CD4-positive, alpha-beta memory T cell (primary cell): ENCODE measurements at regions of chr17 and their contacts with region 1.

Region 1: DNA sequence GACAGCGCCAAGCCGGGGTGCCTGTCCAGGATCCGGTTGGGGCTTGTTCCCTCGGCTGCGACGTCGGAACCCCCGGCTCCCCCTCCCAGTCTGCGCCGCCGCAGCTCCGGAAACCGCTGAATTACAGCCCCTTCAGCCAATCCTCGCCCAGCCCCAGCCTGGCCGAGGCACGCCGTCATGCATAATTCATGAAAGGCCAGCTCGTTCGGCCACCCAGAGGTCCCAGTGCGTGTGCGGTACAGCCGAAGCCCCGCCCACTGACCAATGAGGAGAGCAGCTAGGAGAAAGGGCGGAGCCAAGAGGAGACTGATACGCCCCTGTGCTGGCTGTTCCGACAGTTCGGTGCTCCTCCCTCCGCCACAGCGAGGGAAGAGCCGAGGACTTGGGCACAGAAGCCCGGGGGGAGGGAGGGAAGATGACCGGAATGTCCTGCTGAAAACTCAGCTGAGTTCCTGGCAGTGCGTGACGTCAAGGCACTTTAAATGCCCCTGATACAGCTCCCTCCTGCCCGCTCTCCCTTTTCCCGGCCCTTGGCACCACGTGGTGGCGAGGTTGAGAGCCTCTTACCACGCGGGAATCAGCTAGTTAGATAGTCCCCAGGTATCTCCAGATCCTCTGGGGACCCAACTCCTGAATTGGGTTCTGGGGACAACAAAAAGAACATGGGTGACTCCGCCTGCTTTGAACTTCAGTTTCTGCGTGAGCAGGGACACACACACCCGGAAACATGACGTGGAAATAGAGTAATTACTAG is at the start of gene STAT3:
- DNase-seq: peak; percentile 100
- H3K4me3 ChIP-seq: peak within 1 kb of the TSS; percentile 86 to 92
- H3K4me3 Mint-ChIP-seq: peak within 1 kb of the TSS; percentile 93 to 99 (median 96)
- H3K27ac ChIP-seq: peak within 1 kb of the TSS; percentile 99
- H3K27ac Mint-ChIP-seq: peak within 1 kb of the TSS; percentile 99 to 100 (median 100)
- H3K4me1 ChIP-seq: peaks cover 42% of the 10 kb centered on the region
- H3K4me1 Mint-ChIP-seq: peaks cover 28 to 53% (median 41%) of the 10 kb centered on the region in 4 donors
- H3K27me3 ChIP-seq: no peaks in the 10 kb centered on the region
- H3K27me3 Mint-ChIP-seq: no peaks in the 10 kb centered on the region
- total RNA-seq, gene STAT3: 129 to 131 TPM

Region 2: DNA sequence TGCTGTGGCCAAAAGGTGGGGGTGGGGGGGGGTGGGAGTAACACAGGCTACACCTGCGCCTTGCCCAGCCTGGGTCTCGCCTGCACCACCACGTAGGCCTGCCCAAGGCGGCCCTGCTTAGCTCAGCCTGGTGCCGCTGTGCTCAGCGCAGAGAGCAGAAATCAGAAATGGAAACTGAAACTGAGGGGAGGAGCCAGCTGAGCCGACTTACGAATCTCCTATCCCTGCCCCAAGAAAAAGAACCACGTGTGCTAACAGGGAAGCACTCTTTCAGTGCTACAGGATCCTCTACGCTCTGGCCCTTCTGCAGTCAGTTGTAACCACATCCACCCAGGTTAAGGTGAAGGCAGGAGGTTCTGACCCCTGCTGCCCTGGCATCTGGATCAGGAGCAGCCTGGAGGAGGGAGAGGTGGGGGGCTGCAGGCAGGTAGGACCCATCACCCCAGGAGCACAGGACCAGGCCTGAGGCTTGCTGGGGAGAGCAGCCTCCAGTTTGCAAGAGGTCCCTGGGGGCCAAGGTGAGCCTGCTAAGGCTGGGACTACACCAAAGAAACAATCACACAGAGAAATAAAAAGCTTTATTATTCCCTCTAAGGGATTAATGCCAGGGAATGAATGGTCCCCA is 275.9 kb before region 1 on chr17 and contains the start of gene DHX58:
- CTCF ChIA-PET with region 1: interaction called, 3 read pairs
- POLR2A ChIA-PET with region 1: interaction called, 14 read pairs
- intact Hi-C with region 1: no loop called
- DNase-seq: peak; percentile 81 to 87 (median 84)
- H3K4me3 ChIP-seq: peak within 1 kb of the TSS; percentile 76 to 86
- H3K4me3 Mint-ChIP-seq: peak within 1 kb of the TSS; percentile 87 to 95 (median 92)
- H3K27ac ChIP-seq: peak within 1 kb of the TSS; percentile 88
- H3K27ac Mint-ChIP-seq: peak within 1 kb of the TSS; percentile 92 to 98 (median 98)
- H3K4me1 ChIP-seq: peaks cover 37% of the 10 kb centered on the region
- H3K4me1 Mint-ChIP-seq: peaks cover 24 to 64% (median 46%) of the 10 kb centered on the region in 4 donors
- H3K27me3 ChIP-seq: no peaks in the 10 kb centered on the region
- H3K27me3 Mint-ChIP-seq: no peaks in the 10 kb centered on the region
- total RNA-seq, gene DHX58: 41.8 to 43.3 TPM

Region 3: DNA sequence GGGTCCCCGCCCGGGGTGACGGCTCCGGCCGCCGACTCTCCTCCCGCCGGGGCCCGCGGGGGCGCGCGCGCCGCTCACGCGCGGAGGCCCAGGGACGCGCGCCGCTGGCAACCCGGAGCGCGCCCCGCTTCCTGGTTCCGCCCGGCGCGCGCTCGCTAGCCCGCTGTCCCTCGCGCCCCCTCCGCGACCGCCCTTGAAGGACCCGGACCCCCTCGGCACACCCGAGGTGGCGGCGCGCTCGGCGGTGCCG is 112.3 kb before region 1 on chr17 and contains the start of gene STAT5B:
- CTCF ChIA-PET with region 1: no interaction called
- POLR2A ChIA-PET with region 1: interaction called, 20 read pairs
- intact Hi-C with region 1: no loop called
- DNase-seq: peak in 4 of 5 donors; percentile 73 to 82 (median 76)
- H3K4me3 ChIP-seq: peak within 1 kb of the TSS; percentile 87 to 97
- H3K4me3 Mint-ChIP-seq: peak within 1 kb of the TSS; percentile 97 to 100 (median 98)
- H3K27ac ChIP-seq: peak within 1 kb of the TSS; percentile 92
- H3K27ac Mint-ChIP-seq: peak within 1 kb of the TSS; percentile 97 to 100 (median 99)
- H3K4me1 ChIP-seq: peaks cover 42% of the 10 kb centered on the region
- H3K4me1 Mint-ChIP-seq: peaks cover 31 to 58% (median 46%) of the 10 kb centered on the region in 4 donors
- H3K27me3 ChIP-seq: no peaks in the 10 kb centered on the region
- H3K27me3 Mint-ChIP-seq: no peaks in the 10 kb centered on the region
- total RNA-seq, gene STAT5B: 244 to 261 TPM

Region 4: DNA sequence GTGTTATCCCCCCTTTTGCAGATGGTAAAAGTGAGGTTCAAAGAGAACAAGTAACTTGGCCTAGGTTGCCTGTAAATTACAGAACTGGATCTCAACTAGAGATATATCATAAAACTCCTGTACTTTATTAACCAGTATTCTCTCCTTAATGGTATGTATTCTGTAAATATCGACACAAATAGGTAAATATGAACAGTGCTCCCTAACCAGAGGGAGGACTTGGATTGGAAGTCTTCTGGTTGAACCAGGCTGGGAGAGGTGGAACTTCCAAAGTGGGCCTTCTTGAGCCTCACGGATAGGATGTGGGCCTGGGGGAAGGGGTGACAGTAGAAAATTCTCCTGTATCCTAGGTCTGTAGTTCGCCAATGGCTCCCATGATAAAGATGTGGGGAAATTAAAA is 92.5 kb before region 1 on chr17:
- CTCF ChIA-PET with region 1: no interaction called
- POLR2A ChIA-PET with region 1: no interaction called
- intact Hi-C with region 1: no loop called
- DNase-seq: no peak
- H3K4me3 ChIP-seq: no peak overlapping the region
- H3K4me3 Mint-ChIP-seq: no peak overlapping the region
- H3K27ac ChIP-seq: no peak overlapping the region
- H3K27ac Mint-ChIP-seq: peak overlapping the region in 1 of 7 donors; percentile 66
- H3K4me1 ChIP-seq: peaks cover 2% of the 10 kb centered on the region
- H3K4me1 Mint-ChIP-seq: peaks cover 14 to 17% (median 15%) of the 10 kb centered on the region in 4 donors
- H3K27me3 ChIP-seq: no peaks in the 10 kb centered on the region
- H3K27me3 Mint-ChIP-seq: no peaks in the 10 kb centered on the region

Region 5: GRCh38 chr17:42322382-42323267 is 65.9 kb before region 1 on chr17:
- CTCF ChIA-PET with region 1: interaction called, 12 read pairs
- POLR2A ChIA-PET with region 1: interaction called, 58 read pairs
- intact Hi-C with region 1: loop called (anchors 5 kb)
- DNase-seq: peak; percentile 91 to 95 (median 91)
- H3K4me3 ChIP-seq: no peak overlapping the region
- H3K4me3 Mint-ChIP-seq: peak overlapping the region in 1 of 8 donors; percentile 6
- H3K27ac ChIP-seq: no peak overlapping the region
- H3K27ac Mint-ChIP-seq: peak overlapping the region; percentile 68 to 94 (median 81)
- H3K4me1 ChIP-seq: peaks cover 24% of the 10 kb centered on the region
- H3K4me1 Mint-ChIP-seq: peaks cover 18 to 44% (median 29%) of the 10 kb centered on the region in 4 donors
- H3K27me3 ChIP-seq: no peaks in the 10 kb centered on the region
- H3K27me3 Mint-ChIP-seq: no peaks in the 10 kb centered on the region

Region 6: DNA sequence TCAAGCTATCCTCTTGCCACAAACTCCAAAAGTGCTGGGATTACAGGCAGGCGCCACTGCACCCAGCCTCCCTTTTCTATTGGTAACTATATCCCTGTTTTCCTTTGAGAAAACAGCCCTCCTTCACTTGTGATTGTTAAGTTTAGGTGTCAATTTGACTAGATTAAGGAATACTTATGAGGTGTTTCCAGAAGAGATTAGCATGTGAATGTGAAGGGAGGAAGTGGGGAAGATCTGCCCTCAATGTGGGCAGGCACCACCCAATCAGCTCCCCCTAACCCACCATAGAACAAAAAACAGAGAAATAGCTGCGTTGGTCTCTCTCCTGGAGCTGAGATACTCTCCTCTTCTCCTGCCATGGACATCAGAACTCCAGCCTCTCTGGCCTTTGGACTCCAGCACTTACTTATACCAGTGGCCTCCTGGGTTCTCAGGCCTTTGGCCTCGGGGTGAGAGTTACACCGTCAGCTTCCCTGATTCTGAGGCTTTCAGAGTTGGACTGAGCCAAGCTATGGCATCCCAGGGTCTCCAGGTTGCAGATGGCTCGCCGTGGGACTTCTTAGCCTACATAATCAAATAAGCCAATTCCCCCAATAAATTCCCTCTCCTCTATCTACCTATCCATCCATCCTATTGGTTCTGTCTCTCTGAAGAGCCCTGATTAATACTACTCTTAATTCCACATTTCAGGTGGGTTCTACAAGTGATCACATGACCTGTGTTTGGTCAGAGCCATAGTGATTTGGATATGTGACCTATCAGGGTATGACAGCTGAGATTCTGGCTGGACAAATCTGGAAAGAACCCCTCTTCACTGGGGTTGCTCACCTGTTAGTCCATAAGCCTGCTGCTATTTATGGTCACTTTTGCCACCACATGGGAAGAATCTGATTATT is 11.6 kb after region 1 on chr17:
- CTCF ChIA-PET with region 1: interaction called, 12 read pairs
- POLR2A ChIA-PET with region 1: interaction called, 43 read pairs
- intact Hi-C with region 1: no loop called
- DNase-seq: no peak
- H3K4me3 ChIP-seq: no peak overlapping the region
- H3K4me3 Mint-ChIP-seq: peak overlapping the region in 3 of 8 donors; percentile 8 to 61 (median 14)
- H3K27ac ChIP-seq: no peak overlapping the region
- H3K27ac Mint-ChIP-seq: peak overlapping the region in 3 of 7 donors; percentile 41 to 73 (median 62)
- H3K4me1 ChIP-seq: peaks cover 11% of the 10 kb centered on the region
- H3K4me1 Mint-ChIP-seq: peaks cover 8 to 13% (median 8%) of the 10 kb centered on the region in 4 donors
- H3K27me3 ChIP-seq: no peaks in the 10 kb centered on the region
- H3K27me3 Mint-ChIP-seq: no peaks in the 10 kb centered on the region

Region 7: DNA sequence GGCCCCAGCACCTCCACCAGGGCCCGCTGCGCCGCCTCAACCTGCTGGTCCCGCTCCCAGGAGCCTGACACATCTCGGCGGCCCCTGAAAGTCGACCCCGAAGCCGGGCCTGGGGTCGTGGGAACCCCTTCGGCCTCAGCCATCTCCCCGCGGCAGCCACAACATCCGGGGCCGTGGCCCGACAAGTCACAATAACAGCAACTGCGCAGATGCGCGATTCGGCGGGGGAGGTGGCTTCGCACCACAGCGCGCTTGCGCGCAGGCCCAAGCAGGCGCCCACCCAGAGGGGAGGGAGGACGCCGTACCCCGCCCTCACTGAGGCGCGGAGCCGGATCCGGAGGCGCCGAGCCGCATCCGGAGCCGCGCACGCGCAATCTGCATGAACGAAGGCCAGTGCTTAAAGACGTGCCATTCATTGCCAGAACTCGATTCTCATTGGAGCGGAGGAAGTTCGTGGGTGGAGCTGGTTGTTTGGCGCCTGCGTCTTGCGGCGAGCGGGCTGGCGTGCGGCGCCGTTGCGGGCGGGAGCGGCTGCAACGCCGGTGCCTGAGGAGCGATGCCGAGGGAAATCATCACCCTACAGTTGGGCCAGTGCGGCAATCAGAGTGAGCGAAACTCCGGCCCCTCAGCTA is 220.7 kb after region 1 on chr17 and contains the starts of genes RETREG3 and TUBG1:
- CTCF ChIA-PET with region 1: no interaction called
- POLR2A ChIA-PET with region 1: interaction called, 12 read pairs
- intact Hi-C with region 1: no loop called
- DNase-seq: peak; percentile 98 to 100 (median 100)
- H3K4me3 ChIP-seq: peak within 1 kb of the TSS; percentile 87 to 92
- H3K4me3 Mint-ChIP-seq: peak within 1 kb of the TSS; percentile 99 to 100 (median 100)
- H3K27ac ChIP-seq: peak within 1 kb of the TSS; percentile 85
- H3K27ac Mint-ChIP-seq: peak within 1 kb of the TSS; percentile 90 to 100 (median 99)
- H3K4me1 ChIP-seq: peaks cover 47% of the 10 kb centered on the region
- H3K4me1 Mint-ChIP-seq: peaks cover 25 to 55% (median 40%) of the 10 kb centered on the region in 4 donors
- H3K27me3 ChIP-seq: no peaks in the 10 kb centered on the region
- H3K27me3 Mint-ChIP-seq: no peaks in the 10 kb centered on the region
- total RNA-seq, gene RETREG3: 128 to 134 TPM
- total RNA-seq, gene TUBG1: 13.6 to 16.5 TPM